ENCODE measurements at regions of chr3 and their contacts with region 1.

Region 1: DNA sequence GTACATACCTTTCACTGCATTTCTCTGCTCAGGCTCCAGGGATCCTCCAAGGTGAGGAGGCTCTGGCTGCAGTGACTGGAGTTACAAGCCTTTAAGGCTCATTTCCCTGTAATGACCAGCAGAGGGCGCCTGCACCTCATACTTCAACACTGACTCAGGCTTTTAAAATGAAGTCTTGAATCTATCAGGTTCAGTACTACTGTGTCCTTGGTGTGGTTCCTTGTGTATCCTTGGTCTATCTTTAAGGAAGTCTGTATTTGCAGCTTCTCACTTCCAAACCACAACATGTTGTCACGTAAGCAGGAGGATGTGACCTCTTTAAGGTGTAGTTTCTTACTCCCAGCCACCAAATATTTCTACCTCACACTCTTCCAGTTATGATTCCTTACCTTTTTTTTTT is 122.5 kb upstream of the ZBED2 start:
- DNase-seq: peak; percentile 69
- ATAC-seq: peak; percentile 98
- H3K4me3 ChIP-seq: no peak overlapping the region
- H3K27ac ChIP-seq: no peak overlapping the region
- H3K4me1 ChIP-seq: no peaks in the 10 kb centered on the region
- H3K27me3 ChIP-seq: no peaks in the 10 kb centered on the region
- CTCF ChIP-seq: peak; percentile 94

Region 2: DNA sequence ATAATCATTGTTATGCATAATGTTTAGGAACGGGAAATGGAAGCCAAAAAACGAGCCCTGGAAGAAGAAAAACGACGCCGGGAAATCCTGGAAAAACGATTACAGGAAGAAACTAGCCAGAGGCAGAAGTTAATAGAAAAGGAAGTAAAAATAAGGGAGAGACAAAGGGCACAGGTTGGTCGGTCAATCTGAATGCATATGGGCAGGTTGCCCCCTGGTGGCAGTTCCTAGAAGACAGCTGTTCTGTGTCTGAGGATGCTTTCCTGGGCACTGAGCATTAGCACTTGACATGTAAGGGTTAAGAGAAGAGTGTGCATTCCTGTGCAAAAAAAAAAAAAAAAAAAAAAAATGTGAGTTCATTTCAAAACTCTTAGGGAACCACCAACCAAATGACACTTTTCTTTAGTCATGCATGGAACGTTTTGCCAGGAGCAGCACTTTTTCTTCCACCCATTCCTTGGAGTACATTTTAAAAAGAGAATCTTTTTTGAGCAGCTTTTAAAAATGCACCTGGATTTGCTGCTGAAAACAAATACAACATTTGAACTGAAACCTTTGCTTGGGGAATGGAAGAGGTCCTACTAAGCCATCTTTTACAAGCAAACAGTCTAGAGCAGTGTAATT is 250.2 kb after region 1 on chr3:
- intact Hi-C with region 1: loop called (anchors 5 kb)
- DNase-seq: peak; percentile 72
- ATAC-seq: peak; percentile 98
- H3K4me3 ChIP-seq: no peak overlapping the region
- H3K27ac ChIP-seq: peak overlapping the region; percentile 2
- H3K4me1 ChIP-seq: peaks cover 6% of the 10 kb centered on the region
- H3K27me3 ChIP-seq: no peaks in the 10 kb centered on the region
- CTCF ChIP-seq: peak; percentile 90

Measured in upper lobe of right lung (tissue), 1 donor.